ENCODE measurements at regions of chr5 and their contacts with region 1.

Region 1: GRCh38 chr5:41270423-41271251 is 57.3 kb upstream of the C6 start:
- DNase-seq: peak in 5 of 10 donors; percentile 10 to 63 (median 45)

Region 2: DNA sequence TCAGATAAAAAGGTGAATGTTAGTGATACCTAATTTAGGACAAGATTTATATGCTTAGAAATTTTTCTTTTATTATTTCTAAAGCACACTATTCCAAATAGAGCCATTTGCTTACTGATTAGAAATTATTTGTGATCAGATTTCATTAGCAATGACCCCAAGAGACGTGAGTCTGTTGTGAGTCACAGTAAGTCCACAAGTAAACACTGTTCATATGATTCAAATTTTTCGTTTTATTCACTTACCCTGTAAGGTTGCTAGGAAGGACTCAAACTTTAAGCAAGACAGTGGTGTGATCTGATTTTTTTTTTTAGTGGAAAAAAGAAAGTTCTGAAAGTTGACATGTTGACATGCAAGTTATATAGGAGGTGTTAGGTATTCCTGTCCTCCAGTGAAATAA is 428.3 kb before region 1 on chr5:
- intact Hi-C with region 1: no loop called
- DNase-seq: no peak

Region 3: DNA sequence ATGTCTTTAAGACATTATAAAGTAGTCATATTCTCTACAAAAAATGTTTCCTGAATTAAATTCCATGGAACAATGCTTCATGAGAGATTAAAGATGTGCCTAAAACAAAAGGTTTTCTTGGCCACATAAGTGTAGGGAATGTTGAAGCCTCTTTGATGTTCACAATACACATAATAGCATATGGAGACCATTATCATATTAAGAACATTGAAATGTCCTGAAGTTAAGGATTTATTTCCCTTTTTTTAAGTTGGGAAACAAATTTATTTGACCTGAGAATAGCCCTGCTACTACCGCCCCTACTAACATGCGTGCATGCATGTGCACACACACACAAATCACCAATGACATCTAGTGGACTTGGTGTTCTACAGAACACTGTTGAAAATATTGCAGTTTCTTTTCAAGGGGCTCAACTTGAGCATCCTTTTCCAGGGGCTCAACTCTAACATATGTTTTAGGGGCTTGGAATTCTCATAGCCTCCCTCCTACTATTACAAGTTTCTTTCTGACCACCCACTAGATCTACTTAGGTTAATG is 67.6 kb after region 1 on chr5:
- intact Hi-C with region 1: loop called (anchors 2 kb)
- DNase-seq: no peak

Region 4: DNA sequence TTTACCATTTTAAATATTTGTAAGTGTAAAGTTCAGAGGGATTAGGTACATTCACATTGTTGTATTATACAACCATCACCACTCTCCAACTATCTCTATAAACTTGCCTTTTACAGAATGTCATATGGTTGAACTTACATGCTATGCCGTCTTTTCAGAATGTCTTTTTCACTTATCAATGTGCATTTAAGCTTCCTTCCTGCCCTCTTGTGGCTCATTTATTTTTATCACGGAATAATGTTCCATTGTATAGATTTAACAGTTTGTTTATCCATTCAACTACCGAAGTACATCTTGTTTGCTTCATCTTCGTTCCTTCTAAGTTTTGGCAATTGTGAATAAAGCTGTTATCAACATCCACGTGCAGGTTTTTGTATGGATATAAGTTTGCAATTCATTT is 76.0 kb after region 1 on chr5:
- intact Hi-C with region 1: loop called (anchors 2 kb)
- DNase-seq: no peak

Region 5: DNA sequence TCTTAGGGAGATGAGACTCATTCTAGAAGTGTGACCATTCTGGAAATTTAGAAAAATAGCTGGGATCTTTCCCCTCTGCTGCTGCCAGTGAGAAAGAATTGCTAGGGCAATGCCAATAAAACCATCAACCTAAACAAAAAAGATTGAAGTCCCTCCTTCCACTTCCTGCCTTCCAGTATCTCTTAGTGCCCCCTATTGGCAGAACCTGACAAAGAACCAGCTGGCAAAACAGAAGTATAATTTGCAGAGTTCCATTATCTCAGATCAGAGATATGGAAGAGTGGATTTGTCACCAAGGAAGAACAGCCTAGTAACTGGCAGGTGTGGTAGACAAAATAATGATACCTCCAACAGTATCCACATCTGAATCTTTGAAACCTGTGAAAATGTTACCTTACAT is 253.5 kb after region 1 on chr5:
- intact Hi-C with region 1: loop called (anchors 10 kb)
- DNase-seq: no peak

Region 6: DNA sequence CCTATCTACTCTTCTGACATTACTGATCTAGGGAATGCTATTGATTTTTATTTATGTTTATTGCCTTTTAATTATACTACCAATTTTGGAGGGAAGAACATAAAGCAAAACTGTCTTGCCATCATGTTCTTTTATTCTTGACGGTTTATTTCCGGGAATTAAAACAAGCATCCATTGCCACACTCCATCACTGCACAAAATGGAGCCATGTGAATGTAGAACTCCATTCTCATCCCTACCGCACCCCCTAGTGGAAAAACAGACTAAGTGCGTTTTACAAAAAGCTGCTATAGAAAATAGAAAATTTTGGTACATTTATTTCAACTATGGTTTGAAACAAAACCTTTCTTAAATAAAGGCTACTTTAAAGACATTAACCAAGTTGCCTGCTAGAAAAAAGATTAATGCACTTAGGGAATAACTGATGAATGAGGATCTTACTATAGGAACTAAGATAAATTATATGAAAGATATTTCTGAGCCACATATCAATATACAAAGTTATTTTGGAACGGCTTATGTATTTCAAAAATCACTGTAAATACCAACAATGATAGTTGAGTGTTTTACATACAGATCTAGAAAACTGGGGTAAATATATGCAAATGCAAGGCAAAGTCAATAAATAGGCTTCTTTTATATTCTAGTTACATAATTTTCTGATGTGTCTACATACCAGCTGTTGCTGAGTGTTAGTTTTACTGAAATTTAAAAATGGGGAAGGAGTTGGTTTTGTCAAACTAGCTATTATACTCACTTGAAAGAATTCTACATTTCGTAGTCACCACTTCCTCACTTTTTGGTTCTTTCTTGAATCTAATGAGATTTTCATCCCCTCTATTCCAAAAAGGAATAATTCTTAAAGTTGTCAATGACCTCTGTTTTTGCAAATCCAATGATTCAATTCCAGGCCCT is 573.1 kb after region 1 on chr5:
- intact Hi-C with region 1: loop called (anchors 1 kb)
- DNase-seq: peak in 1 of 10 donors; percentile 21

Measured in posterior cingulate gyrus (tissue), 11 donors.